HAP-1 (cell line): ENCODE measurements at regions of chr18 and their contacts with region 1.

Region 1: DNA sequence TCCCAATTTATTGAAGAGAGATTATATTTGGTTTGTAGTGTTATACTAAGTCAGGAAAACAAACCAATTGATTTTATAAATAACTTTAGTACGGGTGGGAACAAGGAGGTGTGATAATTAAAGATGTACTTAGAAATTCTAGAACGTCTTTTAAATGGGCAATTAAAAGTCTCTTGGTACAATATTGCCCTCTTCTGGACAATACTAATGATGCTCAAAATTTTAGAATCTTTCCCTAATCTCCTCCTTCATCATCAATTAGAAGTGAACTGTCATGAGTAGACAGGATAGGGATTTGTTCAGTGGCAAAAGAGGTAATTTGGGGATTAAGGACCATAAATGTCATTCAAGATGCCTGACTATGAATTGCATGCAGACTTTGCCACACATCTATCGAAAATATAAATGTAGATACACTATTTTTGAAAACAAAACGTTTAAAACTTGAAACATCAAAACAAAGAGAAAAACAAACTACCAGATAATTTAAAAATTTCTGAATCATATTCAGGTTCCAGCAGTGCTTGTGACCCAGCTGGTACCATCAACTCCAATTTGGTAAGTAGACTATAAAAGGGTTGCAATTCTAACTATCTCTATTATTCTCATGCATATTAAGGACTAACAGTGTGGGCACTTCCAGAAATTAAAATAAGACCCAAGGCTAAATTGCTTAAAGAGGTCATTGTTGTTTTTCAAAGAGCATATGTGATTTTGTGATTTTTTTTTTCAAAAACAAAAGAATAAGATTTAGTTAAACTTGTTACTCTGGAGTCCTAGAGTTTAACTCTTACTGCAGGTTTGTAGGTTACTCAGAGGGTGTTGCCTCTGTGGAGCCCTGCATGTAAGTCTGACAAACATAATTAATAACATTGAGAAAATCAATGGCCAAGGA is 123.5 kb downstream of the LAMA3 start:
- DNase-seq: peak; percentile 31 to 98
- H3K4me3 ChIP-seq: no peak overlapping the region
- H3K4me1 ChIP-seq: peaks cover 14% of the 10 kb centered on the region
- H3K27me3 ChIP-seq: peaks cover 4% of the 10 kb centered on the region; the same call in 1 of the 2 replicates

Region 2: GRCh38 chr18:23515911-23516546 is 296.8 kb before region 1 on chr18:
- in situ Hi-C with region 1: loop called (anchors 10 kb)
- DNase-seq: peak; percentile 64 to 84
- H3K4me3 ChIP-seq: no peak overlapping the region
- H3K4me1 ChIP-seq: no peaks in the 10 kb centered on the region
- H3K27me3 ChIP-seq: no peaks in the 10 kb centered on the region

Region 3: DNA sequence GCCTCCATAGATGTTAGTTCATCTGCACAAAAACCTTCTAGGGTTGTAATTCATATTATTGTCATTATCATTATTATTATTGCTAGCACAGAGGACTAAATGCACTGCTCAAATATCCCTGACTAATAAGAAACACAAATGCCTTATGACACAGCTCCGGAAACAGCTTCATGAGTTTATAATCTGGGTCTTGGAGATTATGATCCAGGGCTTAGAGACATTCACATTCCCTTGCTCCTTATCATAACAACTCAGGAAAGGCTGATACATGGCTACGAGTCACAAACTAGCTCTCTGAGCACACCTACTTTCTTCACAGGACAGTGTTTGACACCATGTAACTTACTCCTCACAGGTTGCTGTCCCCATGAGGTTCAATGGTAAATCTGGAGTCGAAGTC is 99.6 kb after region 1 on chr18:
- in situ Hi-C with region 1: no loop called
- DNase-seq: no peak
- H3K4me3 ChIP-seq: no peak overlapping the region
- H3K4me1 ChIP-seq: no peaks in the 10 kb centered on the region
- H3K27me3 ChIP-seq: no peaks in the 10 kb centered on the region

Region 4: DNA sequence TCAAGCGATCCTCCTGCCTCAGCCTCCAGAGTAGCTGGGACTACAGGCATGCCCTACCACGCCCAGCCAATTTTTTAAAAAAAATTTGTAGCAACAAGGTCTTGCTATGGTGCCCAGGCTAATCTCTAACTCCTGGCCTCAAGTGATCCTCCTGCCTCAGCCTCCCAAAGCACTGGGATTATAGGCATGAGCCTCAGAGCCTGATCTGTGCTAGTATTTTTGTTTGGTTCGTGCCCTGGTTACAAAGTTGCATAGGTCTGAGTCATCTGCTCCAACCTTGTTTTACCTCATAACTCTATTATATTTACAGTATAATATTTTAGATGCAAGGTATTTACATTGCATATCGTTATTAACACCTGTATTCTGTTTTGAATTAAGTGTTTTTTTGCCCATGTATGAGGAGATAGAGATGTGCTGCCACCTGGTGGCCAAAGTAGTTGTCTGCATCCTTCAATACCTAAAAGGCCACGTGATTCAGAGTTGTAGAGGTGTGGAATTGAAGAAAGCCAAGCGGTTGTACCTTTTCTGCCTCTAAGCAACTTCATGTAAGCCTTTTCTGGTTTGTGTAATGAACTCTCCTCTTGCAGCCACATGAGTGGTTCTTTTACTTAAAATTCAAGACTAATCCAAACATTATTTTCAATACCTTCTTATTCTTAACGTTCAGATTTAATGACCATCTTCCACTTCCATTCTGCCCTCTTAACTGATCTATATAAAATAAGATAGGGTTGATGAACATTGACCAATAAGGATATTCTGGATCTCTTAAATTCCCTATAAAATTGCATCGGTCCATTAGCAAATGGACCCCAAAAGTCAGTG is 306.2 kb after region 1 on chr18:
- in situ Hi-C with region 1: loop called (anchors 25 kb)
- DNase-seq: peak; percentile 65 to 77
- H3K4me3 ChIP-seq: no peak overlapping the region
- H3K4me1 ChIP-seq: no peaks in the 10 kb centered on the region; the same call in 1 of the 2 replicates
- H3K27me3 ChIP-seq: no peaks in the 10 kb centered on the region

Region 5: DNA sequence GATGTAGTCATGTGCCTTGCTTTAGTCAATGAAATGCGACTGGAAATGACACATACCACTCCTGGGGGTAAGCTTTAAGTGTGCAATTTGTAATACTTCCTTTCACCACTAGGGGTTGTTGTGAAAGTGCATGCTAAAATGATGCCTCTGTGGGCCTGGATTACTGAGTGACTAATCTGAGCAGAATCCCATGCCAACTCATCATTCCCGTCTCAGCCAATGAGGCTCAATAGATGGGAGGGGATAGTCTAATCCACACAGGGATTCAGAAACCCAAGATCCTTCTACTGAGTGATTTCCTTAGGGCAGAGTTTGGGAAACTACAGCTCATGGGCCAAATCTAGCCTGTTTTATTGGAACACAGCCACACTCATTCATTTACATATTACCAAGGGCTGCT is 701.6 kb after region 1 on chr18:
- in situ Hi-C with region 1: no loop called
- DNase-seq: peak; percentile 28 to 48
- H3K4me3 ChIP-seq: no peak overlapping the region
- H3K4me1 ChIP-seq: no peaks in the 10 kb centered on the region
- H3K27me3 ChIP-seq: no peaks in the 10 kb centered on the region